H1 (cell line): ENCODE measurements at regions of chr5 and their contacts with region 1.

Region 1: GRCh38 chr5:76256116-76256889 is 146.8 kb upstream of the IQGAP2 start:
- DNase-seq: peak in 1 of 2 experiments; percentile 60
- H3K4me3 ChIP-seq: no peak overlapping the region
- H3K27ac ChIP-seq: no peak overlapping the region
- H3K4me1 ChIP-seq: no peaks in the 10 kb centered on the region; a peak in 1 of 7 replicates
- H3K27me3 ChIP-seq: no peaks in the 10 kb centered on the region
- CTCF ChIP-seq: peak; percentile 57 to 88 (median 84)
- EP300 ChIP-seq: no peak
- POLR2A ChIP-seq: no peak
- RAD21 ChIP-seq: peak; percentile 99 to 100

Region 2: DNA sequence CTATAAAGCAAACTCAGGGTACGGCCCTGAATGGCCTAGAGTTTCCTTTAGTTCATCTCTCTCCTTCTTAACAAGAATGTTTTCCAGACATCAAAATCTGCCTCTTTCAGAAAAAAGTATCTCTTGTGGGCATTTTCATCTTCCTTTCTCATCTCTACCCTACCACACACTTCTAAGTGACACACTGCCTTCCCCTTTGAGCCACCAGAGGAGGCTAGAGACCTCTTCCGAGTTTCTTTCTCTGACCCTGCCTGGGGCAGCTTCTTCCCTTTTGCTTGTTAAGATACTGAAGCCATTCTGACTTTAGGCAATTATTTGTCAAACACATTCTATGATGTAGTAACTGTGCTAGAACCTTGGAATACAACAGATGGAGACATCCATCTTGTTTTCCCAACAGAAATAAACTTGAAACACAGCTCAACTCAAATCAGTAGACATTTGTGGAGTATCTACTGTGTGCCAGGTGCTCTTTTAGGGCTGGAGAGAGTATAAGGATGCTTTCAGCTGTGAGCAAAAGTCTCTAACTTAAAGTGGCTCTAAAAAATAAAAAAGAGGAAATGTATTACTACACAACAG is 181.7 kb before region 1 on chr5:
- CTCF ChIA-PET with region 1: interaction called, 14 read pairs
- POLR2A ChIA-PET with region 1: no interaction called
- DNase-seq: no peak
- H3K4me3 ChIP-seq: no peak overlapping the region
- H3K27ac ChIP-seq: no peak overlapping the region
- H3K4me1 ChIP-seq: no peaks in the 10 kb centered on the region
- H3K27me3 ChIP-seq: peaks cover 0 to 12% (median 3%) of the 10 kb centered on the region in 4 experiments; a peak in 5 of 7 replicates
- CTCF ChIP-seq: peak; percentile 42 to 88 (median 88)
- EP300 ChIP-seq: no peak
- POLR2A ChIP-seq: no peak
- RAD21 ChIP-seq: peak; percentile 93 to 95

Region 3: GRCh38 chr5:76191826-76192490 is 64.3 kb before region 1 on chr5:
- CTCF ChIA-PET with region 1: interaction called, 11 read pairs
- POLR2A ChIA-PET with region 1: no interaction called
- DNase-seq: no peak
- H3K4me3 ChIP-seq: no peak overlapping the region
- H3K27ac ChIP-seq: no peak overlapping the region
- H3K4me1 ChIP-seq: peaks cover 0 to 16% (median 6%) of the 10 kb centered on the region in 4 experiments; a peak in 3 of 7 replicates
- H3K27me3 ChIP-seq: no peaks in the 10 kb centered on the region
- CTCF ChIP-seq: no peak
- EP300 ChIP-seq: no peak
- POLR2A ChIP-seq: no peak
- RAD21 ChIP-seq: no peak

Region 4: GRCh38 chr5:76269932-76270610 is 13.8 kb after region 1 on chr5:
- CTCF ChIA-PET with region 1: interaction called, 13 read pairs
- POLR2A ChIA-PET with region 1: interaction called, 3 read pairs
- DNase-seq: no peak
- H3K4me3 ChIP-seq: no peak overlapping the region
- H3K27ac ChIP-seq: no peak overlapping the region
- H3K4me1 ChIP-seq: no peaks in the 10 kb centered on the region
- H3K27me3 ChIP-seq: no peaks in the 10 kb centered on the region
- CTCF ChIP-seq: no peak
- EP300 ChIP-seq: no peak
- POLR2A ChIP-seq: no peak
- RAD21 ChIP-seq: no peak

Region 5: DNA sequence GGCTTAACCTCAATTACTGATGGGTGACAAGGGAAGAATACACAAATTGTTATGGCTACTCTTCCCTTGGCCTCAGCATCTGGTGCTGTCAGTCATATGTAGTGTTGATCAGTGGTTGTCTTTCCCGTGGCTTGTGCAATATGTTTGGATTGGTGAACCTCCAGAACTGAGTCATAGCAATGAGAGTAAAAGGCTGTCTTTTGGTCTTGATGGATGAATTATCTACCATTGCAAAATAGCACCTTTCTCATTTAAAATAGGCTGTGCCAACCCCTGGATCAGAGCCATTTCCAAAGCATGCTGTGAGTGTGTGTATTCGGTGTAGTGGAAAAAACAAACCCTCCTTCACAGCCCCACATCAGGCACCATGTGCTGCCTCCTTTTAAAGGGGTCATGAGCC is 445.0 kb after region 1 on chr5:
- CTCF ChIA-PET with region 1: no interaction called
- POLR2A ChIA-PET with region 1: no interaction called
- DNase-seq: no peak
- H3K4me3 ChIP-seq: no peak overlapping the region
- H3K27ac ChIP-seq: no peak overlapping the region
- H3K4me1 ChIP-seq: no peaks in the 10 kb centered on the region
- H3K27me3 ChIP-seq: no peaks in the 10 kb centered on the region
- CTCF ChIP-seq: no peak
- EP300 ChIP-seq: no peak
- POLR2A ChIP-seq: no peak
- RAD21 ChIP-seq: no peak